Mammary epithelial cell (primary cell): ENCODE measurements at regions of chr16 and their contacts with region 1.

Region 1: GRCh38 chr16:70438969-70439862 is at the start of gene ST3GAL2:
- DNase-seq: peak; percentile 88
- H3K4me3 ChIP-seq: peak within 1 kb of the TSS; percentile 53 to 66 (median 60)
- H3K27ac ChIP-seq: no peak within 1 kb of the TSS
- H3K4me1 ChIP-seq: peaks cover 20% of the 10 kb centered on the region
- H3K27me3 ChIP-seq: no peaks in the 10 kb centered on the region
- CTCF ChIP-seq: no peak
- total RNA-seq, gene ST3GAL2: 14.0 to 14.5 TPM

Region 2: DNA sequence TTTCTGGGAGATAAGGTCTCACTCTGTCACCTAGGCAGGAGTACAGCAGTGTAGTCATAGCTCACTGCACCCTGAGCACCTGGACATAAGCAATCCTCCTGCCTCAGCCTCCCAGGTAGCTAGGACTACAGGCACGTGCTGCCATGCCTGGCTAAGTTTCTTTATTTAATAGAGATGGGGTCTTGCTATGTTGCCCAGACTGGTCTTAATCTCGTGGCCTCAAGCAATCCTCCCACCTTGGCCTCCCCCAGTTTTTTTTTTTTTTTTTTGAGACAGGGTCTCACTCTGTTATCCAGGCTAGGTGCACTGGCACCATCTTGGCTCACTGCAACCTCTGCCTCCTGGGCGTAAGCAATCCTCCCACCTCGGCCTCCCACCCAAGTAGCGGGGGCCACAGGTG is 119.1 kb before region 1 on chr16:
- CTCF ChIA-PET with region 1: no interaction called
- dilution Hi-C with region 1: loop called (anchors 5 kb)
- in situ Hi-C with region 1: no loop called
- intact Hi-C with region 1: no loop called
- DNase-seq: no peak
- H3K4me3 ChIP-seq: no peak overlapping the region
- H3K27ac ChIP-seq: no peak overlapping the region
- H3K4me1 ChIP-seq: no peaks in the 10 kb centered on the region
- H3K27me3 ChIP-seq: no peaks in the 10 kb centered on the region
- CTCF ChIP-seq: no peak

Region 3: GRCh38 chr16:70380861-70381603 is 58.2 kb before region 1 on chr16:
- CTCF ChIA-PET with region 1: no interaction called
- dilution Hi-C with region 1: no loop called
- in situ Hi-C with region 1: no loop called
- intact Hi-C with region 1: loop called (anchors 1 kb)
- DNase-seq: peak; percentile 97
- H3K4me3 ChIP-seq: peak overlapping the region; percentile 74 to 95 (median 83)
- H3K27ac ChIP-seq: peak overlapping the region; percentile 54
- H3K4me1 ChIP-seq: peaks cover 7% of the 10 kb centered on the region
- H3K27me3 ChIP-seq: no peaks in the 10 kb centered on the region
- CTCF ChIP-seq: peak; percentile 12 to 54

Region 4: GRCh38 chr16:70395345-70395901 is 43.8 kb before region 1 on chr16:
- CTCF ChIA-PET with region 1: no interaction called
- dilution Hi-C with region 1: loop called (anchors 5 kb)
- in situ Hi-C with region 1: no loop called
- intact Hi-C with region 1: no loop called
- DNase-seq: peak; percentile 21
- H3K4me3 ChIP-seq: no peak overlapping the region
- H3K27ac ChIP-seq: no peak overlapping the region
- H3K4me1 ChIP-seq: peaks cover 19% of the 10 kb centered on the region
- H3K27me3 ChIP-seq: no peaks in the 10 kb centered on the region
- CTCF ChIP-seq: peak; percentile 63 to 78

Region 5: DNA sequence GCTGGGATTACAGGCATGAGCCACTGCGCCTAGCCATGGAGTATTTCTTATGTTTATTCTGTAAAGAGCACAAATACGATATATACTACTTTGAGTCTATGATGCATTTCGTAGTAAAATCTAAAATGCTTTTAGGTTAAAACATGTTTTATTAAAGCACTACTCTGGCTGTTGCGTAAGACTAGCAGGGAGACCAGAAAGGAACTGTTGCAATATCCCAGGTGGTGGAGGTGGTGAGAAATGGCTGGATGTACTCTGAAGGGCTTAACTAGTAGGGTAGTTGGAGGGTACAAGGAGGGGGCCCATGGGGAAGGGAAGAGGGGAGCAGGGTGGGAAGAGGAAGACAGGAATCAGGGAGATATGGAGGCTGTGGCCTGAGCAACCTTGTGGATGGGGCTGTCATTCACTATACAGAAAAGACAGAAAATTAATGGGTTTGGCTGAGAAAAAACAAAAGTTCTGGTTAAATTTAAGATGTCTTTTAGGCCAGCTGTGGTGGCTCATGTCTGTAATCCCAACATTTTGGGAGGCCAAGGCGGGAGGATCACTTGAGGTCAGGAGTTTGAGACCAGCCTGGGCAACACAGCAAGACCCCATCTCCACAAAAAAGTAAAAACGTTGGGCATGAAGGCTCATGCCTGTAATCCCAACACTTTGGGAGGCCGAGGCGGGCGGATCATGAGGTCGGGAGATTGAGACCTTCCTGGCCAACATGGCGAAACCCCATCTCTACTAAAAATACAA is 36.1 kb before region 1 on chr16:
- CTCF ChIA-PET with region 1: no interaction called
- dilution Hi-C with region 1: no loop called
- in situ Hi-C with region 1: no loop called
- intact Hi-C with region 1: loop called (anchors 2 kb)
- DNase-seq: peak; percentile 32
- H3K4me3 ChIP-seq: no peak overlapping the region
- H3K27ac ChIP-seq: no peak overlapping the region
- H3K4me1 ChIP-seq: peaks cover 20% of the 10 kb centered on the region
- H3K27me3 ChIP-seq: no peaks in the 10 kb centered on the region
- CTCF ChIP-seq: no peak

Region 6: GRCh38 chr16:70478912-70479341 is 39.7 kb after region 1 on chr16:
- CTCF ChIA-PET with region 1: no interaction called
- dilution Hi-C with region 1: loop called (anchors 5 kb)
- in situ Hi-C with region 1: no loop called
- intact Hi-C with region 1: no loop called
- DNase-seq: no peak
- H3K4me3 ChIP-seq: no peak overlapping the region
- H3K27ac ChIP-seq: no peak overlapping the region
- H3K4me1 ChIP-seq: peaks cover 40% of the 10 kb centered on the region
- H3K27me3 ChIP-seq: no peaks in the 10 kb centered on the region
- CTCF ChIP-seq: no peak

Region 7: GRCh38 chr16:70523076-70523742 is 84.0 kb after region 1 on chr16 and contains the start of gene COG4:
- CTCF ChIA-PET with region 1: no interaction called
- dilution Hi-C with region 1: loop called (anchors 5 kb)
- in situ Hi-C with region 1: no loop called
- intact Hi-C with region 1: loop called (anchors 5 kb)
- DNase-seq: peak; percentile 77
- H3K4me3 ChIP-seq: peak within 1 kb of the TSS; percentile 90 to 97 (median 93)
- H3K27ac ChIP-seq: peak within 1 kb of the TSS; percentile 83
- H3K4me1 ChIP-seq: peaks cover 35% of the 10 kb centered on the region
- H3K27me3 ChIP-seq: no peaks in the 10 kb centered on the region
- CTCF ChIP-seq: no peak
- total RNA-seq, gene COG4: 42.7 to 52.0 TPM

Region 8: DNA sequence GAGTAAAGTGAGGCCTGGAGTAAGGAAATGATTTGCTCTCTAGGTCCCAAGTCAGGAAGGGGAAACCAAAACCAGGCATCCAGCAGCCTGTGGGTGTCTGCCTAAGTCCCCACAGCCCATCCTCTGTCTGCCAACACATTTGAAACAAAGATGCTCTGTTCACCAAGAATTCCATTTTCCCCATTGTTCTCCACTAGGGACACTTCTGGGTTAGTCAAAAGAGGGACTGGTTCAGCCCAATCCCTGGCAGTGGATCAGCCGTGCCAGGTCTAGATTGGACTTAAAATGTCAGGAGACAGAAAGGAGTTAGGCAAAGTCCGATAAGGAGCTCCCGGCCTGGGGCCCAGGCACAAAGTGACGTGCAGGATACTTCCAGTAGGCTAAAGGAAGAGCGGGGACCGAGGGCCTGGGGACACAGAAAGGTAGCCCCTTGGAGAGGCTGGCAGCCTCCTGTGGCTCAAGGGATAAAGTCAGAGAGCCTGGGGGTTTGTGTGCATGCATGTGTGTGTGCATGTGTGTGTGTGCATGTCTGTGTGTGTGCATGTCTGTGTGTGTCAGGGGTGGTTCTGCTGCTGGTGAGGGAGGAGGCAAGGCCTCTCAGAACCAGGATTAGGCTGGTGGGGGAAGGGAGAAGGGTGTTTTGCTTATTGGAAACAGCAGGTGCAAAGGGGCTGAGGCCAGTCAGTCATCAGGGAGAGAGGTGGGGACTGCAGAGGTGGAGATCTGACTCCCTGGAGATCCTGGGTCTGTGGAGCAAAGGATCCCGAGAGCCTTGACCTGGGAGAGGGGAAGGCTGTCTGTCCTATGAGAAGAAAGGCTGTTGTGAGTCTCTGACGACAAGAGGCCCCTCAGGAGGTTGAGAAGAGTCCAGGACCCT is 165.4 kb after region 1 on chr16:
- CTCF ChIA-PET with region 1: no interaction called
- dilution Hi-C with region 1: no loop called
- in situ Hi-C with region 1: no loop called
- intact Hi-C with region 1: no loop called
- DNase-seq: no peak
- H3K4me3 ChIP-seq: no peak overlapping the region
- H3K27ac ChIP-seq: no peak overlapping the region
- H3K4me1 ChIP-seq: peaks cover 7% of the 10 kb centered on the region
- H3K27me3 ChIP-seq: no peaks in the 10 kb centered on the region
- CTCF ChIP-seq: no peak

Region 9: GRCh38 chr16:70653809-70654771 is 214.9 kb after region 1 on chr16:
- CTCF ChIA-PET with region 1: no interaction called
- dilution Hi-C with region 1: no loop called
- in situ Hi-C with region 1: no loop called
- intact Hi-C with region 1: no loop called
- DNase-seq: peak; percentile 79
- H3K4me3 ChIP-seq: no peak overlapping the region
- H3K27ac ChIP-seq: no peak overlapping the region
- H3K4me1 ChIP-seq: peaks cover 10% of the 10 kb centered on the region
- H3K27me3 ChIP-seq: no peaks in the 10 kb centered on the region
- CTCF ChIP-seq: peak; percentile 79 to 84